ENCODE measurements at regions of chr11 and their contacts with region 1.

Region 1: GRCh38 chr11:86202013-86202336 is 42.6 kb upstream of the EED start:
- DNase-seq: no peak
- H3K4me3 Mint-ChIP-seq: no peak overlapping the region
- H3K27ac Mint-ChIP-seq: no peak overlapping the region
- H3K4me1 Mint-ChIP-seq: peaks cover 15% of the 10 kb centered on the region
- H3K27me3 Mint-ChIP-seq: no peaks in the 10 kb centered on the region

Region 2: GRCh38 chr11:86047275-86047991 is 154.5 kb before region 1 on chr11:
- intact Hi-C with region 1: loop called (anchors 1 kb)
- DNase-seq: no peak
- H3K4me3 Mint-ChIP-seq: peak overlapping the region; percentile 65
- H3K27ac Mint-ChIP-seq: peak overlapping the region; percentile 96
- H3K4me1 Mint-ChIP-seq: peaks cover 73% of the 10 kb centered on the region
- H3K27me3 Mint-ChIP-seq: no peaks in the 10 kb centered on the region

Region 3: DNA sequence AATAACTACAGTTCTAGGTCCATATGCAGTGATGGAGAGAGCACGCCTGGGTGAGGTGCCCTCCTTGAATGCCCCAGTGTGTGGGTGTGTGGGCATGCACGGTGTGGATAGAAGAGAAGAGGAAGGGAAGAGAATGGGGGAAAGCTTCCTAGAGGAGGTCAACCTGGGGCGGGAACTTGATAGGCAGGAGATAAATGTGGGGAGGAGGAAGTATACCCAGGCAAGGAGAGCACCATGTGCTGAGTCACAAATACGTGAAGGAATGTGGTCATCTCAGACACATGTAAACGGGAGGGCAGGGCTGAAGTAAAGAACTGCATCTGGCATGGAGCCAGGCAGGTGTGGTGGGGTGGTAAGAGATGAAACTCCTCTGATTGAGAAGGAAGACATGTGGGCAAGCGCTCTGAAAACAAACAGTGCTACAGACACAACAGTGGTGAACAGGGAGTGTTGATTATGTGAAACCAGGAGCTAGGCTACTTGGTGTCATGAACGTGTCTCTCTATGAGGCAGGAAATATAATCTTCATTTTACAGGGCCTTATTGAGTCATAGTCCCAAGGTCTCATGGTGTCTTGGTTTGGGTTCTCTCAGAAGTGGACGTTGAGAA is 18.9 kb before region 1 on chr11:
- intact Hi-C with region 1: loop called (anchors 1 kb)
- DNase-seq: peak; percentile 48
- H3K4me3 Mint-ChIP-seq: no peak overlapping the region
- H3K27ac Mint-ChIP-seq: no peak overlapping the region
- H3K4me1 Mint-ChIP-seq: peaks cover 26% of the 10 kb centered on the region
- H3K27me3 Mint-ChIP-seq: no peaks in the 10 kb centered on the region

Region 4: DNA sequence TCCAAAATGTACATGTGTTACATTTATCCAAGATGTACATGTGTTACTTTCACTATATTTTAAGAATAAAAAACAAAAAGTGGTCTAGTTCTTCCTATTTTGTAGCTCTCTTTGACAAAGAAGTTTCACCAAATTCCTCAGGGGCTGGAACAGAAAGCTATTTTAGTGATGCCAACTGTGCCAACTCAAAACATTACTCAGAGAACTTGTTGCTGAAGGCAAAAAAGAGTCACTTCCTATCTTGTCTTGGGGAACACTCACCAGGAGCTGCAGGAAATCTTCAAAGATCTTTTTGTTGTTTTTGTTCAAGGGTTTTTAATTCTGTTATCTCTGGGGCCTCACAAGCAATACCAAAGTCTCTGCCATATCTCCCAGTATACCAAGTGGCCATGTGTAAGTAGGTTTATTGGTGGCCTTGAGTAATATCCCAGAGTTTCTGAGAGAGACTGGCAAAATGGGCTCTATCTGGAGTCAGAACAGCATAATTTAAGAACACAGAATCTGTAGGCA is 29.0 kb after region 1 on chr11:
- intact Hi-C with region 1: loop called (anchors 1 kb)
- DNase-seq: no peak
- H3K4me3 Mint-ChIP-seq: no peak overlapping the region
- H3K27ac Mint-ChIP-seq: peak overlapping the region; percentile 38
- H3K4me1 Mint-ChIP-seq: peaks cover 54% of the 10 kb centered on the region
- H3K27me3 Mint-ChIP-seq: peaks cover 3% of the 10 kb centered on the region

Measured in activated T-helper 2 cell treated with anti-CD3 and anti-CD28 coated beads, Interferon-gamma antibody, Interleukin-2, Interleukin-4, amounts not matched to agents 10 μg/mL and 5 μg/mL and 100 μg/mL, durations not matched to agents 14 hours and 24 hours and 36 hours (primary cell).